MCF 10A (cell line): ENCODE measurements at regions of chr16 and their contacts with region 1.

Region 1: DNA sequence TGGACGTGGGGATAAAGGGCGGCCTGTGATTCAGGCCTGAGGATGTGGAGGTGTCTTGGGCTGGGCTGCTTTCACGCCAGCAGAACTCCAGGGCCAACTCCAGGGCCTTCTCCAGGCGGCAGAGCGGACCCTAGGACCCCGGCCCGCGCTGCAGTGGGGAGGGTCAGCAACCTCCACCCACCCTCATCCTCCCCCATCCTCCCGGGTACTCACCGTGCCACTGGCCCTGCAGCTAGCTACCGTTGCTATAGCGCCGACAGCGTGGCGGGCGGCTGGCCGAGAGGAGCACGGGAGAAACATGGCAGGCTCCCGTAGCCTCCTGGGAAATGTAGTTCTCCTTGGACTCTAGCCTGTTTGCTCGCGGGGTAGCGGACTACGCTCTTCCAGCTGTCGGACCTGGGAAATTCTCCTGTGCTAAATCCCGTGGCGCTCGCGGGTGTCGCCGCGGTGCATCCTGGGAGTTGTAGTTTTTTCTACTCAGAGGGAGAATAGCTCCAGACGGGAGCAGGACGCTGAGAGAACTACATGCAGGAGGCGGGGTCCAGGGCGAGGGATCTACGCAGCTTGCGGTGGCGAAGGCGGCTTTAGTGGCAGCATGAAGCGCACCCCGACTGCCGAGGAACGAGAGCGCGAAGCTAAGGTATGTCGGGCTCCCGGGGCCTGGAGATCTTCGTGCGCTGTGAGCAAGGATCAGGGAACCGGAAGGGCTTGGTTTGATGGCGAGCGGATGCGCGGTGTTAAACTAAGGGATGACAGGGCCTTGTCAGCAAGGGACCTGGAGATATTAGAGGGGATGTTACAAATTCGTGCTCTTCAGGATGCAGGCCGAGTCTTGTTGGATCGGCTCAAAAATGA is at the starts of genes FTO and RPGRIP1L:
- DNase-seq: peak; percentile 99
- H3K4me3 Mint-ChIP-seq: peak within 1 kb of the TSS; percentile 100
- H3K27ac Mint-ChIP-seq: peak within 1 kb of the TSS; percentile 96
- H3K4me1 Mint-ChIP-seq: peaks cover 9% of the 10 kb centered on the region
- H3K27me3 Mint-ChIP-seq: no peaks in the 10 kb centered on the region
- CTCF ChIP-seq: no peak
- total RNA-seq, gene FTO: 55.0 and 67.7 TPM in 2 replicates
- total RNA-seq, gene RPGRIP1L: 13.4 and 17.3 TPM in 2 replicates

Region 2: GRCh38 chr16:53881371-53881770 is 177.6 kb after region 1 on chr16:
- CTCF ChIA-PET with region 1: interaction called, 3 read pairs
- POLR2A ChIA-PET with region 1: no interaction called
- intact Hi-C with region 1: loop called (anchors 5 kb)
- DNase-seq: peak; percentile 80
- H3K4me3 Mint-ChIP-seq: no peak overlapping the region
- H3K27ac Mint-ChIP-seq: peak overlapping the region; percentile 67
- H3K4me1 Mint-ChIP-seq: peaks cover 5% of the 10 kb centered on the region
- H3K27me3 Mint-ChIP-seq: no peaks in the 10 kb centered on the region
- CTCF ChIP-seq: no peak